ENCODE measurements at regions of chr19 and their contacts with region 1.

Region 1: GRCh38 chr19:35247526-35248306 is 1.1 kb upstream of the LSR start:
- H3K4me3 Mint-ChIP-seq: peak overlapping the region; percentile 78
- H3K27ac Mint-ChIP-seq: peak overlapping the region; percentile 16
- H3K4me1 Mint-ChIP-seq: peaks cover 36% of the 10 kb centered on the region
- H3K27me3 Mint-ChIP-seq: peaks cover 64% of the 10 kb centered on the region

Region 2: GRCh38 chr19:34904846-34905527 is 342.7 kb before region 1 on chr19:
- intact Hi-C with region 1: no loop called
- H3K4me3 Mint-ChIP-seq: no peak overlapping the region
- H3K27ac Mint-ChIP-seq: no peak overlapping the region
- H3K4me1 Mint-ChIP-seq: no peaks in the 10 kb centered on the region
- H3K27me3 Mint-ChIP-seq: peaks cover 38% of the 10 kb centered on the region

Region 3: DNA sequence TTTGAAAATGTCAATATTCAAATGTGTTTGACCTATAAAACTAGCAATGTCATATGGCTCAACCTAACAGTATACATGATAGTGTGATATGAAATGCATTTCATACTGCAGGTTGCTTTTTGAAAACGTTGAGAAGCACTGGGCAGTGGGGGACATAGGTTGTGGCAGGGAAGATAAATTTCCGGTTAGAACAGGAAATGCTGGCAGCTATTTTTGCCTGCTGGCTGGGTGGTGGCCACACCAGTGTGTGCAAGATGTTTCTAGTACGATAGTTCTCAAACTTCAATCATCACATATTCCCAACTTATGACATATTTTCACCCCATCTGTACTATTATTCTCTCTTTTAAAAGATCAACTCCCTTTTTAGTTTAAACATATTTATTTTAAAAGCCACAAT is 76.0 kb before region 1 on chr19:
- intact Hi-C with region 1: no loop called
- H3K4me3 Mint-ChIP-seq: no peak overlapping the region
- H3K27ac Mint-ChIP-seq: no peak overlapping the region
- H3K4me1 Mint-ChIP-seq: peaks cover 55% of the 10 kb centered on the region
- H3K27me3 Mint-ChIP-seq: no peaks in the 10 kb centered on the region

Region 4: DNA sequence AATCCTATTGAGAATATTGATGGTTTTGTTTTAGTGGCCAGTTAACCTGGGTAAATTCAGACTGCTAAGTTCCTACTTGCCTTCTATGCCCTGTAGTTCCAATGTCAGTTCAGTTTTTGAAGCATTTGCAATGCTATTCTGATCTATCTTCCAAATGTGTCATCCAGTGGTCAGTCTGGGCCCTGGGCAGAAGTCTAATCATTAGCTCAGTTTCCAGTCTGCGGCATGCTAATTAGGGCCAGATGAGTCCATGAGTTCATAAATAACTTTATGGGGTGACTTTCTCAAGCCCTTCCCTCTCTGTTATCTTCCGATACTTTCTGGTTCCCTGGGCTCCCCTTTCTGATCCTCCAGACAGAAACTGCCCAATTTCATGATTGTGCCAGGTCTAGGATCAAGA is 51.9 kb before region 1 on chr19:
- intact Hi-C with region 1: loop called (anchors 10 kb)
- H3K4me3 Mint-ChIP-seq: no peak overlapping the region
- H3K27ac Mint-ChIP-seq: no peak overlapping the region
- H3K4me1 Mint-ChIP-seq: peaks cover 5% of the 10 kb centered on the region
- H3K27me3 Mint-ChIP-seq: peaks cover 21% of the 10 kb centered on the region

Measured in dendritic cell treated with granulocyte-macrophage colony-stimulating factor and Interleukin-4, amounts not matched to agents 40 ng/mL and 50 ng/mL, for 4 days (primary cell).